ENCODE measurements at regions of chr4 and their contacts with region 1.

Region 1: GRCh38 chr4:173370477-173371291 is at the start of gene SAP30:
- DNase-seq: peak; percentile 94 to 99 (median 96)

Region 2: DNA sequence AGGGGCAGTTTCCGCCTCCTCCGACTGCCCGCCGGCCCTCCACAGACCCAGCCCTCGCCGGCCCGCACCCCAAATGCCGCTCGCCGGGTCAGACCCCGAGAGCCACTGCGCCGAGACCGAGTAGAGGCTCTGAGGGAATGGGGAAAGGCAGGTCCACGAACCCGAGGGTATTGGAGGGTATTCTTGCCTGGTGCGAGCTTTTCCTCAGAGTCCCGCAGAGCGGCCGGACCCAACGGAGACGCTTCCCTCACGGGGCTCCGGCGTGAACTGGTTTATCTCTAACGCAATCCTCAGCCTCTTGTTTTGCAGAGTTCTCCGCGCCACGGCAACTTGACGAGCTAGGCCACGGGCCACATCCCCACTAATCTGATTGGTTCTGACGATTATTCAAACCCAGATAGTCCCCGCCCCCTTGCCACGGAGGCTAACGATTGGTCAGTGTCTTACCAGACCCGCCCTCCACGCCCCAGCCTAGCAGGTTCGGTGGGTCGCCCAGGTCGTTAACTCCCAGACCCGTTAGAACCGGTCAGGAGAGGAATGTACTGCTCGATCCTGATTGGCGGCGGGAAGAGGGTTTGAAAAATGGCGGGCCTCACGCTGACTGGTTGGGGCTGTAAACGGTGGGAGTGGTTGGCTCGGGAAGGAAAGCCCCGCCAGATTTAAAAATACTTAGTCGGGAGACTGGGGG is 36.5 kb before region 1 on chr4 and contains the start of gene HMGB2:
- intact Hi-C with region 1: loop called (anchors 1 kb)
- DNase-seq: peak; percentile 99 to 100 (median 100)

Region 3: DNA sequence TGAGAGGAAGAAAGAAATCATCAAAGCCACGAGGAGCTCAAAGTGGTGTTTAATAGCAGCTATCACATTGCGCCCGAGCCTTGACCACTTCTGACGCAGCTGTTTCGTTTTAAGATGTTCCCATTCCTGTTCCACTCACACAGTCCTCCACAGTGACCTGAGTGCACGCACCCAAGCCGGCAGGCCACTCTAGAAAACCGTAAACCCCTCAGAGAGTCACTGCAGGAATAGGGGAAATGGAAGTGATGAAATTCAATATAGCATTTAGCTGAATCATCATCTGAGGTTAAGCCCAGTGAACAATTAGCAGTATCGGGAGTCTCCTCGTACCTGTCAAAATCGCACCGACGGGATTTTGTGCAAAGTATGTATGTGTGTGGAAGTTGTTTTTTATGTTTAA is 177.2 kb after region 1 on chr4:
- intact Hi-C with region 1: no loop called
- DNase-seq: no peak

Measured in posterior cingulate gyrus (tissue), 11 donors.